ENCODE measurements at regions of chr12 and their contacts with region 1.

Region 1: GRCh38 chr12:59113831-59114615 is 193.7 kb upstream of the LRIG3 start:
- DNase-seq: peak; percentile 64 to 93 (median 81)

Region 2: DNA sequence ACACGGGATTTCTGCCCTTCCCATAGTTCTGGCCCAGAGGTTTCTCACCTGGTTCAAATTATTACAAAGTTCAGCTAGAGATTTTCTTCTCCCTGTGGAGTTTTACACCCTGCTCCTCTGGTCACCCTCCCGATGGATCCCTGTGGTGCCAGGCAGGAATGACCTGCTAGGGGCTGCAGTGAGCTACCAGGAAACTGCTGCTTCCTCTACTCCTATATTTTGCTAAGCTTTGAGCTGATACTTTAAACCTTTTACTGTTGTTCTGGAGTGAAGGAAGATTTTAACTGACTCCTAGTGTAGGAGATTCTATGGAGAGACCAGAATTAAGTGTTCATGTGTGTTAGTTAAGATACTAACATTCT is 163.3 kb before region 1 on chr12:
- intact Hi-C with region 1: no loop called
- DNase-seq: no peak

Region 3: GRCh38 chr12:59372956-59373355 is 258.9 kb after region 1 on chr12:
- intact Hi-C with region 1: loop called (anchors 5 kb)
- DNase-seq: peak in 38 of 42 donors; percentile 5 to 78 (median 38)